ENCODE measurements at regions of chr14 and their contacts with region 1.

Region 1: GRCh38 chr14:23631702-23632460 is 4.3 kb upstream of the DHRS2 start:
- DNase-seq: peak; percentile 72
- H3K4me3 Mint-ChIP-seq: no peak overlapping the region
- H3K27ac Mint-ChIP-seq: no peak overlapping the region
- H3K4me1 Mint-ChIP-seq: peaks cover 4% of the 10 kb centered on the region
- H3K27me3 Mint-ChIP-seq: peaks cover 3% of the 10 kb centered on the region

Region 2: DNA sequence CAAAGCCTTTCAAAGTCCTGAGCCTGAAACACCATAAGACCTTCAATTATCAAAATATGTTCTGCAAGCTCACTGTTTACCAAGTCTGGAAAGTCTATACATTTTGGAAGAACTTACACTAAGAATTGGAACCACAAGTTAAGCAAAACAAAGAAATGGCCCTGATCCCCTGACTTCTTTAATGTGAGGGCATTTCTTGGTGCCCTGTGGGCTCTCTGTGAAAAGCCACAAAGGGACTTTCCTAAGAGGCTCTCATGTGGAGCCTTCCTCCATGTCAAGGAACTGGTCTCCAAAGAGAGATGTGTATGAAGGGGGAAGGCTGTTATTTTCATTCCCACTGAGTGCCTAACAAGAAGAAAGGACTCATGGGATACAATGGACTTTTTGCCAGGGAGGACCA is 210.3 kb before region 1 on chr14:
- CTCF ChIA-PET with region 1: no interaction called
- POLR2A ChIA-PET with region 1: no interaction called
- DNase-seq: no peak
- H3K4me3 Mint-ChIP-seq: no peak overlapping the region
- H3K27ac Mint-ChIP-seq: peak overlapping the region; percentile 3
- H3K4me1 Mint-ChIP-seq: peaks cover 21% of the 10 kb centered on the region
- H3K27me3 Mint-ChIP-seq: no peaks in the 10 kb centered on the region

Region 3: GRCh38 chr14:23517650-23518326 is 114.1 kb before region 1 on chr14:
- CTCF ChIA-PET with region 1: no interaction called
- POLR2A ChIA-PET with region 1: no interaction called
- DNase-seq: no peak
- H3K4me3 Mint-ChIP-seq: no peak overlapping the region
- H3K27ac Mint-ChIP-seq: no peak overlapping the region
- H3K4me1 Mint-ChIP-seq: peaks cover 4% of the 10 kb centered on the region
- H3K27me3 Mint-ChIP-seq: no peaks in the 10 kb centered on the region

Region 4: DNA sequence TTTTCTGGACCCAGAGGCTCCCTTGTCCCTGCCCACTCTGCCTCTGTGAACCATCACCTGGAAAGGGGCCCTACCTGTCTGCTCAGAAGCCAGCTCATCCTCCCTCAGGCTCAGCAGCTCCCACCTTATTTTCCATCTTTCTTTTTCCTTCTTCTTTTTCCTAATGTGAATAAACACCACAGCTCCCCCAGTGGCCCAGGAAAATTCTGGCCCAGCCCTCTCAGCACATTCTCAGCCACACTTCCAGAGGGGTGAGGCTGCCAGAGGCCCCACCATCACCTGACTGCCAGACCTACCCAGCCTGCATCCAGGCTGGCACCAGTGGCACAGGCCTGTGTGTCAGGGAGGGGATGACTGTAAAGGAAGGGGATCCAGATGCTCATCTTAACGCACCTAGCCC is 103.3 kb before region 1 on chr14:
- CTCF ChIA-PET with region 1: no interaction called
- POLR2A ChIA-PET with region 1: no interaction called
- DNase-seq: no peak
- H3K4me3 Mint-ChIP-seq: no peak overlapping the region
- H3K27ac Mint-ChIP-seq: no peak overlapping the region
- H3K4me1 Mint-ChIP-seq: peaks cover 9% of the 10 kb centered on the region
- H3K27me3 Mint-ChIP-seq: no peaks in the 10 kb centered on the region

Region 5: DNA sequence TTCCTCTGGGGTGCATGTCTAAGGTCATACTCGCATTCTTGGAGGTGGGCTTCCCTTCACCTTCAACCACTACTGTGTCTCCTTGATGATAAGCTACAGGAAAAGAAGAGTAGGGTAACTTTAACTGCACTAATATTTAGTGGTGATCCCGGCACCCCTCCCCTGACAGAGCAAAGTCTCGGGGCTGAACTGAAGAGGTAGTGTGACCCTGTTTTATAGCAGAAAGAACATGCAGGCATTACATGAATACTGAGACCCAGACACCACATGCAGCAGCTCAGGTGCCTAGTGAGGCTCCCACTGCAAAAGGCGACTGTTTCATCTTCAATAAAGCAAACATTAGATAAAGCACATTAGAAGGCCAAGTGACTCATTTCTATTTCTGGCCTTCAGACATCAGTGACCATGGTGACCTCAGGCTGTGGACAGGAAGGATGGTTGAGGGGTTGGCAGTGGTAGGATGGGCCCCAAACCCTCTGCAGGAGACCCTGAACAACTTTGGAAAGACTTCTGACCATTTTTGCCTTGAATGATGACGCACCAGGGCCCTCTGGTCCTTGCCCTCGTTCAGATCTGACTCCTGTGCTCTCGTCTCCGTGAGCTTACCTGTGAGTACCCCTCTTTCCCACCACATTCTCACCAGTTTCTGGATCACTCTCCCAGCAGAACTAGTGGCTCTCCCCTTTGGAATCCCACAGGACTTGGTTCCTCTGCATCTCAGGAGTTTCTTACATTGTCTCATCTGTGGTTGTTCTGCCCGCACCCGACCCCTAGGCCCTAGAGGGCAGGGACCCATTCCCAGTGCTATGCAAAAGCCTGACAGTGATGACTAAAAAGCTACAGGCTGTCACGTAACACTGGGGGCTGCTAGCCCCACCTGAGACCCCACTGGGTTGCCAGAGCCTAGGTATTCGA is 29.4 kb before region 1 on chr14:
- CTCF ChIA-PET with region 1: interaction called, 12 read pairs
- POLR2A ChIA-PET with region 1: no interaction called
- DNase-seq: no peak
- H3K4me3 Mint-ChIP-seq: no peak overlapping the region
- H3K27ac Mint-ChIP-seq: no peak overlapping the region
- H3K4me1 Mint-ChIP-seq: peaks cover 9% of the 10 kb centered on the region
- H3K27me3 Mint-ChIP-seq: no peaks in the 10 kb centered on the region

Region 6: DNA sequence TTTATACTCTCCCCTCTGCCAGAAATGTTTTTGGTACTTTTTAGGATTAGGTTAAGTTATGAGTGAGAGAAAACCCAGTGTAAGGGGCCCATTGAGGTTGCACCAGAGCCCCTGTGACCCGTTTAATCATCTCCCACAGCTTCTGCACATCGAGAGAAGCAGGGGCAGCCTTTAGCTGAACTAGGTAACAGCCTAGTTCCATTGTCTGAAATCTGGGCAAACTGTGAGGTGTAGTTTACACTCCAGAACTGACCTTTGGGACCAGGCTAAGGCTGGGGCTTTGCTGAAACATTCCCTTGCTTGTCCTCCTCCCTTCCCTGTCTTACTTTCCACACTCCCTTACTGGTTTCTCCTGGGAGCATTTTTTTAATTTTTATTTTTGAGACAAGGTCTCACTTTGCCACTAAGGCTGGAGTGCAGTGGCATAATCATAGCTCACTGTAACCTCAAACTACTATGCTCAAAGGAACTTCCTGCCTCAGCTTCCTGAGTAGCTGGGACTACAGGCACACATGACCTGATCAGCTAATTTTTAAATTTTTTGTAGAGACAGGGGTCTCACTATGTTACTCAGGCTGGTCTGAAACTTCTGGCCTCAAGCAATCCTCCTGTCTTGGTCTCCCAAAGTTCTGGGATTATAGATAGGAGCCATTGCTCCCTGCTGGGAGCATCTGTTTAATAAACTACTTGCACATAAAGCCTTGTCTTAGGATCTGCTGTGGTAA is 21.6 kb before region 1 on chr14:
- CTCF ChIA-PET with region 1: interaction called, 34 read pairs
- POLR2A ChIA-PET with region 1: no interaction called
- DNase-seq: peak; percentile 34
- H3K4me3 Mint-ChIP-seq: no peak overlapping the region
- H3K27ac Mint-ChIP-seq: peak overlapping the region; percentile 93
- H3K4me1 Mint-ChIP-seq: peaks cover 34% of the 10 kb centered on the region
- H3K27me3 Mint-ChIP-seq: peaks cover 1% of the 10 kb centered on the region

Region 7: DNA sequence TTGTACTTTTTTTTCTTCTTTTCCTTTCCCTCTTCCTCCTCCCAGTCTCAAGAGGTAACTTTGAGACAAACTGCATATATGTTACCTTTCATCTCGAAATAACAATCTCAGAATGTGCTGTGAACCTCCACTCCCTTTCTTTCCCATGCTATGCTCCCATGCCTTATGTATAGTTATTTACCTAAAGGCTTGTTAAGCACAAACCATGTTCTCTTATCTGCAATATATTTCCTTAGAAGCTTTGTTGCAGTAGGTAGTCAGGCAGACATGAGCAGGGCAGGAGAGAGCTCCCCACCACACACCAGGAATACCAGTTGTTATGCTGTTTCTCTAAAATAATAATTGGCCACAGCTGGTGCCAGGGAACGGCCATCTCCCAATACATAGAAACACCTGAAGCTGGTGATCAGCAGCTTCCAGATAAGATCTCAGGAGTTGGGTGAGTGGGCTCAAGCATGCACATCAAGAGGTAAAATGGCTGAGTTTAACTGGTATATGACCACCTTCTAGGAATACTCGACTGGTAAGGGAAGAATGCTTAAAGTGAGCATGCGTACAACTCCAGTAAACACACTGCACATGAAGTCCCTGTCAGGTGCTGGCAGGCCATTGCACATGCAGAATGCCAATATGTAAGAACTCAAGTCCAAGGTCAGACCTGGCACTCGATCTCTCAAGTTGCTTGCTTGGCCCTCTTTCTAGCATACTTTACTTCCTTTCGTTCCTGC is 10.5 kb before region 1 on chr14:
- CTCF ChIA-PET with region 1: interaction called, 14 read pairs
- POLR2A ChIA-PET with region 1: no interaction called
- DNase-seq: no peak
- H3K4me3 Mint-ChIP-seq: no peak overlapping the region
- H3K27ac Mint-ChIP-seq: no peak overlapping the region
- H3K4me1 Mint-ChIP-seq: no peaks in the 10 kb centered on the region
- H3K27me3 Mint-ChIP-seq: peaks cover 12% of the 10 kb centered on the region